Activated B cell treated with CpG ODN at 0.5 μM for 24 hours (primary cell): ENCODE measurements at regions of chr13 and their contacts with region 1.

Region 1: GRCh38 chr13:49652355-49653305 is 24.3 kb downstream of the ARL11 start:
- DNase-seq: no peak
- ATAC-seq: peak; percentile 78
- H3K4me3 Mint-ChIP-seq: no peak overlapping the region
- H3K27ac Mint-ChIP-seq: no peak overlapping the region
- H3K4me1 Mint-ChIP-seq: peaks cover 6% of the 10 kb centered on the region
- H3K27me3 Mint-ChIP-seq: no peaks in the 10 kb centered on the region
- CTCF ChIP-seq: no peak

Region 2: DNA sequence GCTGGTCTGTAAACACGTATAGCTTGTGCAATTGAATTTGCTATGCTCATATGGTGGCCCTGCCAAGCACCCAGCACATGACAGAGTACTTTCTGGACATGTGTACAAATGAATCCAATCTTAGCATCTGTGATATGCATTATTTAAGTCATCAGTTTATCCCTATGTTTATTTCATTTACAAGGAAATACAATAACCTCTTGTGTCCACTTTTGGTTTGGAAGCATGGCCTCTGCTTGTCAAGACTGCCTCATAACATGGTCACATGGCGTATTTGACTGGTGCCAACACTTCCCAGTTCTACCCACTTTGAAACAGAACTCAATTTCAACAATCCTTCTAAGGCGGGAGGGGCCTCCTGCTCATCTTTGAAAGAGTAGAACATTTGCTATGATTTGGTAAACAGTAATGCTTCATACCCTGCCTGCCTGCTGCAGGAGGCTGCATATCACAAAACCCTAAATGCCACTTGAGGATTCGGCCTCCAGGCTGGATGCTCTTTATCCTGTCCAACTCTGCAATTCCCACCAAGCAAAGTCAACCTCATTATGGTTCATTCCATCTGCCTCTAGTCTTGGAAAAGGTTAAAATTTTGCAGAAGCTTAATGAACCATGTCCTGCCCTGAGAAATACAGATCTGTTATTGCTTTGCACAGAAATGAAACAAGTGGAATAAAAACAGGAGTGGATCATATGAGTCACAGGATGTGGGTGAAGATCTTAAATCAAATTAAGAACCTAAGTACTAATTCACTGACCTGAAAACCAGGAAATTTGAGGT is 847.6 kb before region 1 on chr13:
- CTCF ChIA-PET with region 1: no interaction called
- POLR2A ChIA-PET with region 1: no interaction called
- intact Hi-C with region 1: no loop called
- DNase-seq: no peak
- ATAC-seq: no peak
- H3K4me3 Mint-ChIP-seq: no peak overlapping the region
- H3K27ac Mint-ChIP-seq: no peak overlapping the region
- H3K4me1 Mint-ChIP-seq: no peaks in the 10 kb centered on the region
- H3K27me3 Mint-ChIP-seq: no peaks in the 10 kb centered on the region
- CTCF ChIP-seq: no peak

Region 3: GRCh38 chr13:49821216-49822030 is 168.8 kb after region 1 on chr13:
- CTCF ChIA-PET with region 1: no interaction called
- POLR2A ChIA-PET with region 1: no interaction called
- intact Hi-C with region 1: loop called (anchors 1 kb)
- DNase-seq: no peak
- ATAC-seq: no peak
- H3K4me3 Mint-ChIP-seq: no peak overlapping the region
- H3K27ac Mint-ChIP-seq: no peak overlapping the region
- H3K4me1 Mint-ChIP-seq: no peaks in the 10 kb centered on the region
- H3K27me3 Mint-ChIP-seq: peaks cover 19% of the 10 kb centered on the region
- CTCF ChIP-seq: no peak

Region 4: GRCh38 chr13:50236898-50237318 is 584.3 kb after region 1 on chr13:
- CTCF ChIA-PET with region 1: no interaction called
- POLR2A ChIA-PET with region 1: no interaction called
- intact Hi-C with region 1: no loop called
- DNase-seq: no peak
- ATAC-seq: peak; percentile 90
- H3K4me3 Mint-ChIP-seq: peak overlapping the region; percentile 55
- H3K27ac Mint-ChIP-seq: peak overlapping the region; percentile 92
- H3K4me1 Mint-ChIP-seq: peaks cover 53% of the 10 kb centered on the region
- H3K27me3 Mint-ChIP-seq: no peaks in the 10 kb centered on the region
- CTCF ChIP-seq: no peak